ENCODE measurements at regions of chr11 and their contacts with region 1.

Region 1: DNA sequence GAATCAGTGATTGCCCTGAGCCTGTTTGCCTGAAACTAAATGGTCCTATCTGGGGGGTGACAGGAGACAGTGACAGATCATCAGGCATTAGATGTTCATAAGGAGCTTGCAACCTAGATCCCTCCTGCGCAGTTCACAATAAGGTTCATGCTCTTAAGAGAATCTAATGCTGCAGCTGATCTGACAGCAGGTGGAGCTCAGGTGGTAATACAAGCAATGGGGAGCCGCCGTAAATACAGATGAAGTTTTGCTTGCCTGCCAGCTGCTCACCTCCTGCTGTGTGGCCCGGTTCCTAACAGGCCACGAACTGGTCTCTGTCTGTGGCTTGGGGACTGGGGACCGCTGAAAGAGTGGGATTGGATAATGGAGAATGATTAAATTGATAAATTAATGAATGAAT is 14.0 kb downstream of the NOX4 start:
- DNase-seq: peak; percentile 48 to 56
- H3K4me3 ChIP-seq: no peak overlapping the region
- H3K27ac ChIP-seq: no peak overlapping the region
- H3K4me1 ChIP-seq: no peaks in the 10 kb centered on the region
- H3K27me3 ChIP-seq: no peaks in the 10 kb centered on the region
- CTCF ChIP-seq: peak in 3 of 7 experiments; percentile 10 to 50 (median 32)
- EP300 ChIP-seq: no peak
- POLR2A ChIP-seq: no peak

Region 2: GRCh38 chr11:89625171-89625570 is 148.0 kb after region 1 on chr11:
- intact Hi-C with region 1: loop called (anchors 10 kb)
- DNase-seq: no peak
- H3K4me3 ChIP-seq: no peak overlapping the region
- H3K27ac ChIP-seq: no peak overlapping the region
- H3K4me1 ChIP-seq: no peaks in the 10 kb centered on the region
- H3K27me3 ChIP-seq: no peaks in the 10 kb centered on the region
- CTCF ChIP-seq: no peak
- EP300 ChIP-seq: no peak
- POLR2A ChIP-seq: no peak

Region 3: GRCh38 chr11:90321018-90321417 is 843.8 kb after region 1 on chr11:
- intact Hi-C with region 1: no loop called
- DNase-seq: no peak
- H3K4me3 ChIP-seq: no peak overlapping the region
- H3K27ac ChIP-seq: no peak overlapping the region
- H3K4me1 ChIP-seq: no peaks in the 10 kb centered on the region
- H3K27me3 ChIP-seq: no peaks in the 10 kb centered on the region
- CTCF ChIP-seq: no peak
- EP300 ChIP-seq: no peak
- POLR2A ChIP-seq: no peak